Caco-2 (cell line): ENCODE measurements at regions of chr16 and their contacts with region 1.

Region 1: GRCh38 chr16:17578921-17579874 is 108.4 kb upstream of the XYLT1 start:
- DNase-seq: peak; percentile 83 to 87
- H3K4me3 ChIP-seq: no peak overlapping the region
- H3K4me3 Mint-ChIP-seq: peak overlapping the region; percentile 53
- H3K27ac Mint-ChIP-seq: peak overlapping the region; percentile 76
- H3K4me1 ChIP-seq: peaks cover 7% of the 10 kb centered on the region
- H3K4me1 Mint-ChIP-seq: peaks cover 9% of the 10 kb centered on the region
- H3K27me3 ChIP-seq: no peaks in the 10 kb centered on the region
- H3K27me3 Mint-ChIP-seq: no peaks in the 10 kb centered on the region
- CTCF ChIP-seq: peak; percentile 76 to 89

Region 2: GRCh38 chr16:16861546-16861945 is 717.7 kb before region 1 on chr16:
- CTCF ChIA-PET with region 1: no interaction called
- POLR2A ChIA-PET with region 1: no interaction called
- intact Hi-C with region 1: loop called (anchors 5 kb)
- DNase-seq: peak; percentile 40 to 57
- H3K4me3 ChIP-seq: no peak overlapping the region
- H3K4me3 Mint-ChIP-seq: no peak overlapping the region
- H3K27ac Mint-ChIP-seq: no peak overlapping the region
- H3K4me1 ChIP-seq: no peaks in the 10 kb centered on the region
- H3K4me1 Mint-ChIP-seq: no peaks in the 10 kb centered on the region
- H3K27me3 ChIP-seq: no peaks in the 10 kb centered on the region
- H3K27me3 Mint-ChIP-seq: peaks cover under 1% of the 10 kb centered on the region
- CTCF ChIP-seq: peak; percentile 70 to 76

Region 3: DNA sequence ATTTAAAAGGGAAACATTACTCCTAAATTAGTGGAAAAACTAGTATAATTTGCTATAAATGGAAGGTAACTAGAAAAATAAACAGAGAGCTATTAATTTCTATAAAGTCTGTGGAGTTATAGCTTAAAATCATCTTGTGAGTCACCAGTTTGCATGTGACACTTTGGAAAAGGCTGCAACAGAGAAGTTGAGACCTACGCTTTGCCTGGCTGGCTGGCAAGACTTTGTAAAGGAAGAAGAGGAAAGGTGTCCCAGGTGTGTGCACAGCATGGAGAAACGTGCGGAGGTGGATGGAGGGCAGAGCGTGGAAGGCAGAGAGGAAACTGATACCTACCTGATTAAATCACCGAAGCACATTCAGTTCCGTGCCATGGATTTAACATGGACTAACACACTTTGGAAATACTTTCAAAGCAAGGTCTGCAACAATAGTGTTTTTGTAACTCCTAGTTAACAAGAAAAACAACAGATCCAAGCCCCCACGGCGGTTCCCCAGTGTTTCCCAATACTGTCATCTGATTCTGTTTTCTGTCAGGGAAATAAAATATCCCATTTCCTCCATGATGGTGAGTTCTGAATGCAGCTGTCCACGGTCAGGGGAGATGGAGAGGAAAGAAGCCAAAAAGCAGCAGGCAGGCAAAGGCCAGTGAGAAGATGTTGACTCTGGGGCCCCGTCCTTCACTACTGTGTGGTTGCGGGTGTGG is 243.2 kb before region 1 on chr16:
- CTCF ChIA-PET with region 1: no interaction called
- POLR2A ChIA-PET with region 1: no interaction called
- intact Hi-C with region 1: no loop called
- DNase-seq: no peak
- H3K4me3 ChIP-seq: no peak overlapping the region
- H3K4me3 Mint-ChIP-seq: no peak overlapping the region
- H3K27ac Mint-ChIP-seq: no peak overlapping the region
- H3K4me1 ChIP-seq: no peaks in the 10 kb centered on the region
- H3K4me1 Mint-ChIP-seq: no peaks in the 10 kb centered on the region
- H3K27me3 ChIP-seq: no peaks in the 10 kb centered on the region
- H3K27me3 Mint-ChIP-seq: no peaks in the 10 kb centered on the region
- CTCF ChIP-seq: no peak

Region 4: GRCh38 chr16:17476414-17477270 is 102.6 kb before region 1 on chr16:
- CTCF ChIA-PET with region 1: interaction called, 16 read pairs
- POLR2A ChIA-PET with region 1: no interaction called
- intact Hi-C with region 1: loop called (anchors 1 kb)
- DNase-seq: peak; percentile 72 to 77
- H3K4me3 ChIP-seq: no peak overlapping the region
- H3K4me3 Mint-ChIP-seq: peak overlapping the region; percentile 41
- H3K27ac Mint-ChIP-seq: peak overlapping the region; percentile 57
- H3K4me1 ChIP-seq: peaks cover 52% of the 10 kb centered on the region
- H3K4me1 Mint-ChIP-seq: peaks cover 33% of the 10 kb centered on the region
- H3K27me3 ChIP-seq: no peaks in the 10 kb centered on the region
- H3K27me3 Mint-ChIP-seq: no peaks in the 10 kb centered on the region
- CTCF ChIP-seq: peak; percentile 38 to 68

Region 5: DNA sequence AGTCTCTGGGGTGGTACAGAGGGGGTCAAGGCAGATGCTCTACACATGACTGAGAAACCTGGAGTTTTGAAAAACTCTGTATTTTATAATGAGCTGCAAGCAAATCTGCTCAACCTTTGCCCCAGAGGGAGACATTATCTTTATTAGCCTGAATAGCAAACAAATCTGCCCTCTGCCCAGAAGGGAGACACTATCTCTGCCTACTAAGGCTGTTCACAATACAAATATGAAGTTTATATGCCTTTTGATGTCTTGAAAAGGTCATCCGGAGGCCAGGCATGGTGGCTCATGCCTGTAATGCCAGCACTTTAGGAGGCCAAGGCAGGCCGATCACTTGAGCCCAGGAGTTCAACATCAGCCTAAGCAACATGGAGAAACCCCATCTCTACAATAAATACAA is 97.5 kb before region 1 on chr16:
- CTCF ChIA-PET with region 1: interaction called, 16 read pairs
- POLR2A ChIA-PET with region 1: no interaction called
- intact Hi-C with region 1: loop called (anchors 1 kb)
- DNase-seq: peak; percentile 73 to 85
- H3K4me3 ChIP-seq: no peak overlapping the region
- H3K4me3 Mint-ChIP-seq: peak overlapping the region; percentile 64
- H3K27ac Mint-ChIP-seq: peak overlapping the region; percentile 51
- H3K4me1 ChIP-seq: peaks cover 68% of the 10 kb centered on the region
- H3K4me1 Mint-ChIP-seq: peaks cover 44% of the 10 kb centered on the region
- H3K27me3 ChIP-seq: no peaks in the 10 kb centered on the region
- H3K27me3 Mint-ChIP-seq: no peaks in the 10 kb centered on the region
- CTCF ChIP-seq: no peak

Region 6: DNA sequence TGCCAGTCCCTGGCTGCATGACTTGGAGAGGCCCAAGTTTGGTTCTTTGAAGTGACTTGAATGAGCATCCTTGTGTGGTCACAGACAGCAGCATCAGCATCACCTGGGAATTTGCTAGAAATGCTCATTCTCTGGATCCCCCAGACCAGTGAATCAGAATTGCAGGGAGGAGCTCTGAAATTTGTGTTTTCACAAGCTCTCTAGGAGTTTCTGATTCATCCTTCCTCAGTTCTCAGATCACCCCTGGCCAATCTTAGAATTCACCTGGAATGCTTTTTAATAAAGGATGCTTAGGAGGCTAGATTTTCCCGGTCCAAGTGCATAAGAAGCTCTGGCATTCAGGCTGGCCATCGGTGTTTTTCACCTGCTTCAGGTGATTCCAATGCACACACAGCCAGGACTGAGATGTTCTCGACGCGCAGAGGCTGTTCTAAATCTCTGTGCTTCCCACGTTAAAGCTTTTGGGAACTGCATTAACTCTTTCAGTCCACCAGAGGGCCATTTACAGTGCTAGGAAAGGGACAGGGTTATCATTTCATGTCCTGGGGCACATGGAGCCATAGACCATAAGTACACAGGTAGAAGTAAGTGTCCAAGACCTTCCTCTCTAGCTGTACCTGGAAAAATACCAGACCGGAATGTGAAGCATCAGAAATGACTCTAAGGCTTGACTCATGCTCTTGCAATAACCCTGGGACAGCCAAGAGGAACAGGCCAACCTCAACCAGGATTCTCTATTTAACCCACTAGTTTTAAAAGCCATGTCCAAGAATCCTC is 22.7 kb before region 1 on chr16:
- CTCF ChIA-PET with region 1: interaction called, 12 read pairs
- POLR2A ChIA-PET with region 1: interaction called, 3 read pairs
- intact Hi-C with region 1: loop called (anchors 1 kb)
- DNase-seq: peak; percentile 27 to 39
- H3K4me3 ChIP-seq: no peak overlapping the region
- H3K4me3 Mint-ChIP-seq: no peak overlapping the region
- H3K27ac Mint-ChIP-seq: no peak overlapping the region
- H3K4me1 ChIP-seq: peaks cover 5% of the 10 kb centered on the region
- H3K4me1 Mint-ChIP-seq: no peaks in the 10 kb centered on the region
- H3K27me3 ChIP-seq: no peaks in the 10 kb centered on the region
- H3K27me3 Mint-ChIP-seq: peaks cover 3% of the 10 kb centered on the region
- CTCF ChIP-seq: peak; percentile 59 to 61